GM12878 (cell line): ENCODE measurements at regions of chr19 and their contacts with region 1.

Region 1: GRCh38 chr19:49224856-49225255 is 67.3 kb downstream of the TRPM4 start:
- DNase-seq: no peak
- ATAC-seq: peak; percentile 90
- H3K4me3 ChIP-seq: no peak overlapping the region
- H3K27ac ChIP-seq: no peak overlapping the region
- H3K4me1 ChIP-seq: no peaks in the 10 kb centered on the region
- H3K27me3 ChIP-seq: no peaks in the 10 kb centered on the region; a peak in 1 of 4 replicates
- CTCF ChIP-seq: peak; percentile 41 to 60 (median 42); a peak in 5 of 6 replicates
- EP300 ChIP-seq: no peak
- POLR2A ChIP-seq: no peak
- RAD21 ChIP-seq: peak; percentile 66

Region 2: DNA sequence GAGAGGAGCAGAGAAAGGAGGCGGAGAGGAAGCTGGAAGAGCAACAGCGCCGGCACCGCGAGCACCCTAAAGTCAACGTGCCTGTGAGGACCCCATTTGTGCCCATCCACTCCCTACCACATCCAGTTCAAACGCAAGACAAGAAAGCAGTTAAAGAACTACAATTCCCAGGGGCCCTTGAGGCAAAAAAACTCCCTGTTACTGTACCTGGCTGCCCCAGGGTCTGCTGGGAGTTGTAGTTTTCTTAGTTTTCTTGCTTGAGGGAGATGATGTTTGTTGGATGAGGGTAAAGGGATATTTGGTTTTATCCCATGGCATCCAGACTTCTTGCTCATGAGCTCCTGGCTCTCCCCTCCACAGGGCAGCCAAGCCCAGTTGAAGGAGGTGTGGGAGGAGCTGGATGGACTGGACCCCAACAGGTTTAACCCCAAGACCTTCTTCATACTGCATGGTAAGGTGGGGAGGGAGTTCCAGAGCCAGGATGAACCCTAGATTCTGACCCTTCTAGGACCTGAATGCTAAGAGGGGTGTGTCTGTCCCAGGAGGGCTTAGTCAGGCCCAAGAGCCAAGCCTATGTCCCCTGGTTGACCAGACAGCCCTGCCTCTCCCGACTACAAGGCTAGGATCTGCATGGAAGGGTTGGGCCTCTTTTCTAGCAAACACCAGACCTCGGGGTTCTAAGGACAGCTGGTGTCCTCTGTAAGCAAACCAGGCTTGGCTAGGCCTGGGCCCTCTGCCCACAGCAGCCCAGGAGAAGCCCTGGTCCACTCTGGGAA is 311.6 kb before region 1 on chr19:
- CTCF ChIA-PET with region 1: no interaction called
- POLR2A ChIA-PET with region 1: no interaction called
- RAD21 ChIA-PET with region 1: no interaction called
- SMC1A ChIA-PET with region 1: no interaction called
- in situ Hi-C with region 1: no loop called
- intact Hi-C with region 1: no loop called
- DNase-seq: no peak
- ATAC-seq: peak; percentile 73
- H3K4me3 ChIP-seq: no peak overlapping the region
- H3K27ac ChIP-seq: no peak overlapping the region
- H3K4me1 ChIP-seq: peaks cover 13% of the 10 kb centered on the region
- H3K27me3 ChIP-seq: no peaks in the 10 kb centered on the region
- CTCF ChIP-seq: no peak
- EP300 ChIP-seq: no peak
- POLR2A ChIP-seq: no peak
- RAD21 ChIP-seq: no peak

Region 3: GRCh38 chr19:49200238-49200862 is 24.5 kb before region 1 on chr19:
- CTCF ChIA-PET with region 1: interaction called, 14 read pairs
- POLR2A ChIA-PET with region 1: no interaction called
- RAD21 ChIA-PET with region 1: no interaction called
- SMC1A ChIA-PET with region 1: interaction called, 4 read pairs
- in situ Hi-C with region 1: no loop called
- intact Hi-C with region 1: no loop called
- DNase-seq: no peak
- ATAC-seq: 0 out of 3 replicates have a peak, but pooled peaks have one; percentile 25
- H3K4me3 ChIP-seq: no peak overlapping the region
- H3K27ac ChIP-seq: no peak overlapping the region
- H3K4me1 ChIP-seq: no peaks in the 10 kb centered on the region
- H3K27me3 ChIP-seq: no peaks in the 10 kb centered on the region
- CTCF ChIP-seq: no peak
- EP300 ChIP-seq: no peak
- POLR2A ChIP-seq: no peak
- RAD21 ChIP-seq: no peak

Region 4: GRCh38 chr19:49210108-49210900 is 14.6 kb before region 1 on chr19:
- CTCF ChIA-PET with region 1: interaction called, 10 read pairs
- POLR2A ChIA-PET with region 1: no interaction called
- RAD21 ChIA-PET with region 1: interaction called, 3 read pairs
- SMC1A ChIA-PET with region 1: interaction called, 6 read pairs
- in situ Hi-C with region 1: no loop called
- intact Hi-C with region 1: no loop called
- DNase-seq: no peak
- ATAC-seq: peak; percentile 48; the same call in 2 of the 3 replicates
- H3K4me3 ChIP-seq: no peak overlapping the region
- H3K27ac ChIP-seq: no peak overlapping the region
- H3K4me1 ChIP-seq: peaks cover 7% of the 10 kb centered on the region
- H3K27me3 ChIP-seq: peaks cover 0 to 2% of the 10 kb centered on the region in 2 experiments; a peak in 1 of 4 replicates
- CTCF ChIP-seq: no peak
- EP300 ChIP-seq: no peak
- POLR2A ChIP-seq: no peak
- RAD21 ChIP-seq: no peak

Region 5: DNA sequence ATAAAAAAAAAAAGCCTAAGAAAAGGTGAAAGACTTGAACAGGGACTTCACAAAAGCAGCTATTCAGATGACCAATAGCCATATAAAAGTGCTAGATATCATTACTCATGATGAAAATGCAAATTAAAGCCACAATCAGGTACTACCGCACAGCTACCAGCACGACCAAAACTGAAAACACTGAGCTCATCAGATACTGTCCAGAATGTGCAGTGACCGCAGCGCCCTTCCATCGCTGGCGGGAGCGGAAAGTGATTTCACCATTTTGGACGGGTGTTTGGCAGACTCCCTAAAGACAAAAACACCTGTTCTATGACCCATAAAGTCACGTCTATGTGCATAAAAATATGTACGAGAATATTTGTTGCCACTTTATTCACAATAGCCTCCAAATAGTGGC is 39.4 kb after region 1 on chr19:
- CTCF ChIA-PET with region 1: interaction called, 13 read pairs
- POLR2A ChIA-PET with region 1: no interaction called
- RAD21 ChIA-PET with region 1: no interaction called
- SMC1A ChIA-PET with region 1: no interaction called
- in situ Hi-C with region 1: no loop called
- intact Hi-C with region 1: no loop called
- DNase-seq: no peak
- ATAC-seq: no peak
- H3K4me3 ChIP-seq: no peak overlapping the region
- H3K27ac ChIP-seq: no peak overlapping the region
- H3K4me1 ChIP-seq: no peaks in the 10 kb centered on the region
- H3K27me3 ChIP-seq: no peaks in the 10 kb centered on the region
- CTCF ChIP-seq: no peak
- EP300 ChIP-seq: no peak
- POLR2A ChIP-seq: no peak
- RAD21 ChIP-seq: no peak

Region 6: DNA sequence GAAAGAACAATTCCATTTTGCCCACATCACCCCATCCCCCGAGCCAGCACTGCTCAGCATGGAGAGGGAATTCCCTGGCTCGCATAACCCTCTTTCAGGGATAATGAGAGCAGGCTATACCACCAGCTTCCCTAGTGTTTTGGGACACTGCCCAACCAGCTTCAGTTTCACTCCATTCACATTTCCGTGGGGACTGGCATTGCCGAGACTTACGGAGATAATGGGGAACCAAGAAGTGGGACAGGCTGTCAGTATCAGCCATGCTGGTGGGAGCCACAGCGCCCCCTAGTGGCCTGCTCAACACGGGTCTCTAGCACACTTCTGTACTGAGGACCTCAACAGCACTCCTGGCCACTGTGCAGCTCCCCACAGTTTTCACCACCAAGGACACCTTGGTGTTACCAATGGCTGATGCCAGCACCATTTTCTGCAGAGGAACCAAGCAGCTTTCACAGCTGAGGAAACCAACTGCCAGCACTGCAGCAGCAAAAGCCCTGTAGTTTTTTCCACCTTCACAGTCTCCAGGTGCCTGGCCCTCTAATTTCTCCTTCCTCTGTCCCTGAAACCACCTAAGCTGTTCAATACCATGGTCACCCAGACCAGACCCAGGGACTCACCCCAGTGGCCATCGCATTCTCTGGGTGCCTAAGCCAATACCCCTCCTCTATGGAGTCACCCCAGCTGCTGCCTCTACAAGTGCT is 76.5 kb after region 1 on chr19:
- CTCF ChIA-PET with region 1: interaction called, 21 read pairs
- POLR2A ChIA-PET with region 1: no interaction called
- RAD21 ChIA-PET with region 1: interaction called, 4 read pairs
- SMC1A ChIA-PET with region 1: interaction called, 4 read pairs
- in situ Hi-C with region 1: no loop called
- intact Hi-C with region 1: loop called (anchors 1 kb)
- DNase-seq: peak; percentile 40
- ATAC-seq: peak; percentile 100
- H3K4me3 ChIP-seq: no peak overlapping the region
- H3K27ac ChIP-seq: no peak overlapping the region
- H3K4me1 ChIP-seq: no peaks in the 10 kb centered on the region; the same call in 1 of the 2 replicates
- H3K27me3 ChIP-seq: no peaks in the 10 kb centered on the region
- CTCF ChIP-seq: peak; percentile 88 to 96 (median 96); a peak in 5 of 6 replicates
- EP300 ChIP-seq: no peak
- POLR2A ChIP-seq: no peak
- RAD21 ChIP-seq: peak; percentile 49

Region 7: DNA sequence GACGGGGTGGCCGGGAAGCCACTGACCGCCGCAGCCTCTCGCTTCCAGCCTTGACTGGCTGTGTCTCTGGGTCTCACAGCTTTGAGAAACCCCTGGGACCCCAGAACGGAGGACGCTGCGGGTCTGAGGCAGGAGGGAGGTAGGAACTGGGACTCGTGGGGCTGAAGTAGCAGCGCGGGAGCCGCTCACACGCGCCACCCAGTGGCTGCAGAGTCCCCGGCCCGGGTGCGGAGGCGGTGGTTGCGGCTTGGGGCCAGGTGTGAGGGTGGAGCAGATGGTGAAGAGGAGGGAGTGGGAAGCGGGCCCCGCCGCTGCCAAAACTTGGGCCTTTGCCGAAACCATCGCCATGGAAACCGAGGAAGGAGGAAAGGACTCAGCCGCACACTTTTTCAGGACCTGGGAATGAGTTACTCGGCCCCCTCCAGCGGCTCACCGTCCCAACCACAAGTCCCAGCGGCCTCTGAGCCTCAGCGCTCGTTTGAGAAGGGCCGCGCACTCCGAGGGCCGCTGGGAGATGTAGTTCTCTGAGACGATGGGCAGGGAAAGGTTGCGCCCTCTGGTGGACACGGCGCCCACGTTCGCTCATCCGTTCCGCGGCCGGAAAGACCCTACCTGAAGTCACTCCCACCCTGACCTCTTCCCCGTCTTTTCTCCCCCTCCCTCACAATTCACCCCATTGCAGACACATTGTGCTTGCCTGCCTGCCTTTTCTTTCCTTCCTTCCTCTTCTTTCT is 218.7 kb after region 1 on chr19:
- CTCF ChIA-PET with region 1: interaction called, 5 read pairs
- POLR2A ChIA-PET with region 1: no interaction called
- RAD21 ChIA-PET with region 1: no interaction called
- SMC1A ChIA-PET with region 1: interaction called, 4 read pairs
- in situ Hi-C with region 1: no loop called
- intact Hi-C with region 1: loop called (anchors 1 kb)
- DNase-seq: peak; percentile 80
- ATAC-seq: peak; percentile 92
- H3K4me3 ChIP-seq: peak overlapping the region; percentile 81
- H3K27ac ChIP-seq: peak overlapping the region; percentile 21; the same call in 1 of the 2 replicates
- H3K4me1 ChIP-seq: no peaks in the 10 kb centered on the region
- H3K27me3 ChIP-seq: peaks cover 9 to 20% of the 10 kb centered on the region in 2 experiments
- CTCF ChIP-seq: peak; percentile 70 to 92 (median 90)
- EP300 ChIP-seq: no peak
- POLR2A ChIP-seq: no peak
- RAD21 ChIP-seq: peak; percentile 78

Region 8: DNA sequence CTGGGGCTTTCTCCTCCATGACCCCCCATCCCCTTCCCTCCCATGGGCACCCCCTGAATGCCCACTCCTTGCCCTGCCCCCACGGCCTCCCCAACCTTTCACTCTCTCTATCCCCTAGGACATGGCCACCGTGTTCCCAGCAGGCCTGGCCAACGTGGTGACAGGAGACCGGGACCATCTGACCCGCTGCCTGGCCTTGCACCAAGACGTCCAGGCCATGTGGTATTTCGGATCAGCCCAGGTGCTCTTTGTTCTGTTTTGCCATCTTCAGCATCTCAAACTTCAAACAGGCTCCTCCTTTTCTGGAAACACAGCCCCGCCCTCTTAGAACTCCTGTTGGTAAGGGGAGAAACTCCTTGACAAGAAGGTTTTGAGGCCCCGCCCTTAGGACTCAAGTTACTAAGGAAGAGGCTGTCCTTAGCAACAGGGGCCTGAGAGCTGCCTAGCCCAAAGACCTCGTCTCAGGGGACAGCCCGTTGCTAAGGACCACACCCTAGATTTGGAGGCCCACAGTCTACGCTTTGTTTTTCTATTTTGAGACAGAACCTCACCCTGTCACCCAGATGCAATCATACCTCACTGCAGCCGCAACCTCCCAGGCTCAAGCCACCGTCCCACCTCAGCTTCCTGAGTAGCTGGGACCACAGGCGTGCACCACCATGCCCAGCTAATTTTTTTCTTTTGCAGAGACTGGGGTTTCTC is 244.0 kb after region 1 on chr19:
- CTCF ChIA-PET with region 1: interaction called, 12 read pairs
- POLR2A ChIA-PET with region 1: no interaction called
- RAD21 ChIA-PET with region 1: interaction called, 4 read pairs
- SMC1A ChIA-PET with region 1: interaction called, 6 read pairs
- in situ Hi-C with region 1: no loop called
- intact Hi-C with region 1: loop called (anchors 1 kb)
- DNase-seq: peak; percentile 97
- ATAC-seq: peak; percentile 80
- H3K4me3 ChIP-seq: no peak overlapping the region
- H3K27ac ChIP-seq: peak overlapping the region; percentile 33; the same call in 1 of the 2 replicates
- H3K4me1 ChIP-seq: peaks cover 37% of the 10 kb centered on the region
- H3K27me3 ChIP-seq: no peaks in the 10 kb centered on the region
- CTCF ChIP-seq: no peak
- EP300 ChIP-seq: peak in 1 of 2 experiments; percentile 66; a peak in 1 of 4 replicates
- POLR2A ChIP-seq: no peak
- RAD21 ChIP-seq: no peak